Activated B cell treated with CpG ODN at 0.5 μM for 24 hours (primary cell): ENCODE measurements at regions of chr16 and their contacts with region 1.

Region 1: DNA sequence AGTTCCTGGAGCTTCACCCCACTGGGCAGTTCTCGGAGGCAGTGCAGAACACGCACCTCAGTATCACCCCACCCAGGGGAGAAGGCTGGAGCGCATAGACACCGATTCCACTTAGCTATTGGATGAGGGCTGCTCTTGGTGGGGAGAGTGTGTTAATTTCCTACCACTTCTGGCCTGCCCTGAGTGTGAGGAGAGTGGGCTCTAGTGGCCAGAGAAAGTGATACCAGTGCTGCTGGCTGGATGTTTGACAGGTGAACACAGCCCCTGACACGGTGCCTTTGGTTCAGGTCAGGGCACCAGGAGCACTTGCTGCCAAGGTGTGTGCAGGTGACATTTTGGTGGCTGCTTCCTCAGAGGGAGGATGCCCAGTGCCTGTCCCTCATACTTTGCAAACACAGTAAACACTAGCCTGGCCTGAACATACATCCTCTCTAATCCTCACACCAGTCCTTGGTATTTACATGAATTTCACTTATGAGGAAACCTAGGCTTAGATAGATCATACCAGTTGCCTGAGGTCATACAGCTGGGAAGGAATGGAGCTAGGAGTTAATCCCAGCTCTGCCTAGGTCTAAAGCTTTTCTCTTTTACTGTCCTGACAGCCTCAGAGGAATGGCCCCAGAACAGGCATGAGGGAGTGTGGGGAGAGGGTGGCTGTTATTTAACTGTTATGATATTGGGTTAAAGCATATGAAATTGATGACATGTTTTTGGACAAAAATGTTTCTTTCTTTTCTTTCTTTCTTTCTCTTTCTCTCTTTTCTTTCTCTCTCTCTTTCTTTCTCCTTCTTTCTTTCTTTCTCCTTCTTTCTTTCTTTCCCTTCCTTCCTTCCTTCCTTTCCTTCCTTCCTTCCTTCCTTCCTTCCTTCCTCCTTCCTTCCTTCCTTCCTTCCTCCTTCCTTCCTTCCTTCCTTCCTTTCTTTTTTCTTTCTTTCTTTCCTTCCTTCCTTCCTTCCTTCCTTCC is 21.0 kb upstream of the ITGAX start:
- DNase-seq: no peak
- ATAC-seq: peak; percentile 91
- H3K4me3 Mint-ChIP-seq: no peak overlapping the region
- H3K27ac Mint-ChIP-seq: no peak overlapping the region
- H3K4me1 Mint-ChIP-seq: peaks cover 18% of the 10 kb centered on the region
- H3K27me3 Mint-ChIP-seq: peaks cover 13% of the 10 kb centered on the region
- CTCF ChIP-seq: no peak

Region 2: GRCh38 chr16:30715737-30716445 is 618.1 kb before region 1 on chr16:
- CTCF ChIA-PET with region 1: no interaction called
- POLR2A ChIA-PET with region 1: no interaction called
- intact Hi-C with region 1: no loop called
- DNase-seq: no peak
- ATAC-seq: peak; percentile 99
- H3K4me3 Mint-ChIP-seq: peak overlapping the region; percentile 50
- H3K27ac Mint-ChIP-seq: peak overlapping the region; percentile 91
- H3K4me1 Mint-ChIP-seq: peaks cover 26% of the 10 kb centered on the region
- H3K27me3 Mint-ChIP-seq: no peaks in the 10 kb centered on the region
- CTCF ChIP-seq: no peak

Region 3: DNA sequence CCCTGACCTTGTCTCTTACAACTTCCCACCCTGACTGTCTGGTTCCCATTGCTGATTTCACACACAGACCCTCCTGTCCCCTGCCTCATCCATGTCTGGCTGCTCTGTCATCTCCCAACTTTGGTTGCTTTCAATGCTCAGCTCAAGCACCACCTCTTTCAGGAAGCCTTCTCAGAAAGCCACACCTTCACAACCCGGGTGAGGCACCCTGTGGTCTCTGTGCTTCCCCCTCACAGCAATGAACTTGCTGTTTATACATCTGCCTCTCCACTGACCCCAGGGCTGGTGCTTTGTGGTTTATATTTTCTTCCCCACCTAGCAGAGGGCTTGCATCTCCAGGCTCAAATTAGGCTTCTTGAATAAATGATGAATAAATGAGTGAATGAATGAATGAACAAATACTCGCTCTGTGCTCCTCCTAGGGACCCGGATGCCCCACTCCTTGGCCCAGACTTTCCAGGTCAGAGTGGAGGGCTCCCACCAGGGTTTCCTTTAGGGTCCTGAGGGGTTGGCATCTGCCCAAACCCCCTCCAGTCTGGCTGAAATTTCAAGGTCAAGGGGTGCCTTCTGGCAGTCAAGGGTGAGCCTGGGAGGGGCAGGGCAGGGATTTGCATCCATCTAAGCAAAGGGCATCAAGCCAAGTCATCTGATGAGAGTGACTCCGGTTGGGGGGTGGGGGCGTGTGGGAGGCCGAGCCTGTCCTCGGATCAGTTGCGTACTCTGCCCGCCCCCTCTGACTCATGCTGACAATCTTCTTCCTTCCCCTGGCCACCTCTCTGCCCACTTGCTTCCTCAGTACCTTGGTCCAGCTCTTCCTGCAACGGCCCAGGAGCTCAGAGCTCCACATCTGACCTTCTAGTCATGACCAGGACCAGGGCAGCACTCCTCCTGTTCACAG is 20.7 kb after region 1 on chr16 and contains the start of gene ITGAX:
- CTCF ChIA-PET with region 1: interaction called, 3 read pairs
- POLR2A ChIA-PET with region 1: interaction called, 4 read pairs
- intact Hi-C with region 1: loop called (anchors 2 kb)
- DNase-seq: peak; percentile 42
- ATAC-seq: peak; percentile 72
- H3K4me3 Mint-ChIP-seq: peak within 1 kb of the TSS; percentile 78
- H3K27ac Mint-ChIP-seq: peak within 1 kb of the TSS; percentile 93
- H3K4me1 Mint-ChIP-seq: peaks cover 74% of the 10 kb centered on the region
- H3K27me3 Mint-ChIP-seq: no peaks in the 10 kb centered on the region
- CTCF ChIP-seq: no peak
- total RNA-seq, gene ITGAX: 81.9 and 100 TPM in 2 replicates

Region 4: DNA sequence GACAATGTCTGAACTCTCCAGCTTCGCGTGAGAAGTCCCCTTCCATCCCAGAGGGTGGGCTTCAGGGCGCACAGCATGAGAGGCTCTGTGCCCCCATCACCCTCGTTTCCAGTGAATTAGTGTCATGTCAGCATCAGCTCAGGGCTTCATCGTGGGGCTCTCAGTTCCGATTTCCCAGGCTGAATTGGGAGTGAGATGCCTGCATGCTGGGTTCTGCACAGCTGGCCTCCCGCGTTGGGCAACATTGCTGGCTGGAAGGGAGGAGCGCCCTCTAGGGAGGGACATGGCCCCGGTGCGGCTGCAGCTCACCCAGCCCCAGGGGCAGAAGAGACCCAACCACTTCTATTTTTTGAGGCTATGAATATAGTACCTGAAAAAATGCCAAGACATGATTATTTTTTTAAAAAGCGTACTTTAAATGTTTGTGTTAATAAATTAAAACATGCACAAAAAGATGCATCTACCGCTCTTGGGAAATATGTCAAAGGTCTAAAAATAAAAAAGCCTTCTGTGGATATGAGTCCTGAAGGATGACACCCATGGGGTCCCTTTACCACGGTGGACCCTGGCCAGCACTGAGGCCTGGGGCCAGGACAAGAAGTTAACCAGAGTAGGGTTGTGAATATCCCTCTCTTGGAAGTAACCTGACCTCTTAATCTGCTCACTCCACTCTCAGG is 48.7 kb after region 1 on chr16:
- CTCF ChIA-PET with region 1: interaction called, 7 read pairs
- POLR2A ChIA-PET with region 1: no interaction called
- intact Hi-C with region 1: loop called (anchors 5 kb)
- DNase-seq: peak; percentile 50
- ATAC-seq: peak; percentile 86
- H3K4me3 Mint-ChIP-seq: no peak overlapping the region
- H3K27ac Mint-ChIP-seq: no peak overlapping the region
- H3K4me1 Mint-ChIP-seq: peaks cover 11% of the 10 kb centered on the region
- H3K27me3 Mint-ChIP-seq: peaks cover 2% of the 10 kb centered on the region
- CTCF ChIP-seq: no peak

Region 5: GRCh38 chr16:31868691-31869167 is 534.8 kb after region 1 on chr16:
- CTCF ChIA-PET with region 1: interaction called, 3 read pairs
- POLR2A ChIA-PET with region 1: no interaction called
- intact Hi-C with region 1: loop called (anchors 5 kb)
- DNase-seq: peak; percentile 60
- ATAC-seq: no peak
- H3K4me3 Mint-ChIP-seq: peak overlapping the region; percentile 41
- H3K27ac Mint-ChIP-seq: peak overlapping the region; percentile 66
- H3K4me1 Mint-ChIP-seq: peaks cover 46% of the 10 kb centered on the region
- H3K27me3 Mint-ChIP-seq: peaks cover 6% of the 10 kb centered on the region
- CTCF ChIP-seq: peak; percentile 35